A673 (cell line): ENCODE measurements at regions of chr9 and their contacts with region 1.

Region 1: GRCh38 chr9:69535911-69536310 is 136.3 kb downstream of the APBA1 start:
- DNase-seq: no peak
- H3K4me3 ChIP-seq: no peak overlapping the region
- H3K27ac ChIP-seq: no peak overlapping the region
- H3K4me1 ChIP-seq: no peaks in the 10 kb centered on the region
- H3K27me3 ChIP-seq: peaks cover 50% of the 10 kb centered on the region
- CTCF ChIP-seq: no peak

Region 2: DNA sequence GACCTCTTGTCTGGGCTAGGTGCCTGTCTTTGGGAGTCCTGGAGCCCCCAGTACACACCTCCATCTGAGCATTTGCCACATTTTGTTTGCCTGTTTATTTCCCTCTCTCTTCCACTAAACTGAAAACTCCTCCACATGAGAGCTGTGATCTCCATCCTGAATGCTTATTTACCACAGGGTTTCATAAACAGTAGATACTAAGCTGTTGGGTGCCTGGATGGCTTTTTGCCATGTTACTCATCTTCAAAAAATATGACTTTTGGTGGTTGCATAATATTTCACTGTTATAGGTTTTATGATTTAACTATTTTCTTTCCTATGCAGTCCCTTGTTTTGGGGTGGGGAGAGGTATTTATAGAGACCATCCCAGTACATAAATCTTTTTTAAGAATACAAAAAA is 36.7 kb after region 1 on chr9:
- CTCF ChIA-PET with region 1: no interaction called
- POLR2A ChIA-PET with region 1: interaction called, 19 read pairs
- intact Hi-C with region 1: no loop called
- DNase-seq: no peak
- H3K4me3 ChIP-seq: no peak overlapping the region
- H3K27ac ChIP-seq: no peak overlapping the region
- H3K4me1 ChIP-seq: peaks cover 4% of the 10 kb centered on the region
- H3K27me3 ChIP-seq: no peaks in the 10 kb centered on the region
- CTCF ChIP-seq: no peak

Region 3: GRCh38 chr9:69746859-69747560 is 211.1 kb after region 1 on chr9:
- CTCF ChIA-PET with region 1: no interaction called
- POLR2A ChIA-PET with region 1: no interaction called
- intact Hi-C with region 1: no loop called
- DNase-seq: peak; percentile 23
- H3K4me3 ChIP-seq: no peak overlapping the region
- H3K27ac ChIP-seq: no peak overlapping the region
- H3K4me1 ChIP-seq: peaks cover 33% of the 10 kb centered on the region
- H3K27me3 ChIP-seq: no peaks in the 10 kb centered on the region
- CTCF ChIP-seq: no peak